ENCODE measurements at regions of chr11 and their contacts with region 1.

Region 1: GRCh38 chr11:61792310-61793085 is at the starts of genes FEN1 and TMEM258:
- DNase-seq: peak; percentile 87 to 89
- ATAC-seq: peak; percentile 91 to 97 (median 94)
- H3K4me3 ChIP-seq: peak within 1 kb of the TSS; percentile 65 to 90 (median 78)
- H3K27ac ChIP-seq: peak within 1 kb of the TSS; percentile 89 to 98 (median 96)
- H3K4me1 ChIP-seq: peaks cover 4 to 34% (median 21%) of the 10 kb centered on the region in 9 donors
- H3K27me3 ChIP-seq: no peaks in the 10 kb centered on the region
- CTCF ChIP-seq: peak in 1 of 9 donors; percentile 14
- total RNA-seq, gene FEN1: 3.7 to 8.6 (median 6.2) TPM
- total RNA-seq, gene TMEM258: 98.9 to 142 (median 109) TPM

Region 2: GRCh38 chr11:61834278-61835048 is 42.0 kb after region 1 on chr11:
- intact Hi-C with region 1: loop called in 1 of 10 experiments (anchors 5 kb)
- DNase-seq: peak; percentile 60 to 61
- ATAC-seq: peak; percentile 60 to 88 (median 78)
- H3K4me3 ChIP-seq: no peak overlapping the region
- H3K27ac ChIP-seq: peak overlapping the region in 9 of 10 donors; percentile 35 to 86 (median 66)
- H3K4me1 ChIP-seq: peaks cover 9 to 63% (median 45%) of the 10 kb centered on the region in 9 donors
- H3K27me3 ChIP-seq: no peaks in the 10 kb centered on the region
- CTCF ChIP-seq: no peak

Region 3: GRCh38 chr11:61891331-61892084 is 99.0 kb after region 1 on chr11 and contains the start of gene FADS3:
- intact Hi-C with region 1: loop called in 6 of 10 experiments (anchors 5 kb)
- DNase-seq: peak; percentile 88 to 92
- ATAC-seq: peak; percentile 85 to 91 (median 87)
- H3K4me3 ChIP-seq: peak within 1 kb of the TSS; percentile 63 to 98 (median 93)
- H3K27ac ChIP-seq: peak within 1 kb of the TSS; percentile 84 to 98 (median 96)
- H3K4me1 ChIP-seq: peaks cover 14 to 58% (median 41%) of the 10 kb centered on the region in 9 donors
- H3K27me3 ChIP-seq: no peaks in the 10 kb centered on the region
- CTCF ChIP-seq: peak in 3 of 9 donors; percentile 3 to 29 (median 22)
- total RNA-seq, gene FADS3: 54.9 to 119 (median 71.1) TPM

Region 4: DNA sequence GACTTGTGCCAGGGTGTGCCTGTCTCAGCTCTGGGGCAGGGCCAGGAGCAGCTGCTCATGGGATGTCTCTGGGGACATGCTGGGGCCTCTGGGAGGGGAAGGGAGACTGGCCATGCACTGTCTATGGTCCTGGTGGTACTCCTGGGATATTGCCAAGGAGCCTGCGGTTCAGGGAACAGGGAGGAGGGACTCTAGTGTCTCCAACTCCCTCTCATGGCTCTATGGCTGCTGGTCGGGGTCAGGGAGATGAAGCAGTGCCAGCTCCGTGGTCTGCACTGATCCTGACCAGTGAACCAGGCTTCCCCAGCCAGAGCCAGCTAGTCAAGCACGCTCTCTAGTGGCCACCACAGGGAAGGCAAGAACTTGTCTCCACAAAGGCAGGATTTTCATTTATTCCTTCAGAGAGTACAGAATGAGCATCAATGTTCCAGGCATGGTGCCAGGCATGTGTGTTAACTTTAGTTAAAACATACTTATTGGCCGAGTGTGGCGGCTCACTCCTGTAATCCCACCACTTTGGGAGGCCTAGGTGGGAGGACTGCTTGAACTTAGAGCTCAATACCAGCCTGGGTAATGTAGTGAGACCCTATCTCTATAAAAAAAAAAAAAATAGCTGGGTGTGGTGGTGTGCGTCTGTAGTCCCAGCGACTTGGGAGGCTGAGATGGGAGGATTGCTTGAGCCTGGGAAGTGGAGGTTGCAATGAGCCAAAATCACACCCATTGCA is 155.2 kb after region 1 on chr11:
- intact Hi-C with region 1: loop called in 9 of 10 experiments (anchors 1 to 10 kb)
- DNase-seq: peak; percentile 81 to 89
- ATAC-seq: peak; percentile 77 to 85 (median 83)
- H3K4me3 ChIP-seq: no peak overlapping the region
- H3K27ac ChIP-seq: peak overlapping the region in 2 of 10 donors; percentile 17 to 25
- H3K4me1 ChIP-seq: peaks cover 0 to 34% (median 9%) of the 10 kb centered on the region in 9 donors
- H3K27me3 ChIP-seq: no peaks in the 10 kb centered on the region
- CTCF ChIP-seq: peak; percentile 90 to 98 (median 94)

Region 5: GRCh38 chr11:62108017-62108750 is 315.7 kb after region 1 on chr11:
- intact Hi-C with region 1: loop called in 6 of 10 experiments (anchors 1 to 5 kb)
- DNase-seq: peak in 1 of 2 donors; percentile 57
- ATAC-seq: peak in 3 of 8 donors; percentile 28 to 36 (median 32)
- H3K4me3 ChIP-seq: no peak overlapping the region
- H3K27ac ChIP-seq: peak overlapping the region in 4 of 10 donors; percentile 31 to 59 (median 42)
- H3K4me1 ChIP-seq: peaks cover 13 to 48% (median 28%) of the 10 kb centered on the region in 9 donors
- H3K27me3 ChIP-seq: no peaks in the 10 kb centered on the region
- CTCF ChIP-seq: peak; percentile 81 to 91 (median 88)

Measured in heart right ventricle (tissue), 16 donors.